ENCODE measurements at regions of chr9 and their contacts with region 1.

Region 1: DNA sequence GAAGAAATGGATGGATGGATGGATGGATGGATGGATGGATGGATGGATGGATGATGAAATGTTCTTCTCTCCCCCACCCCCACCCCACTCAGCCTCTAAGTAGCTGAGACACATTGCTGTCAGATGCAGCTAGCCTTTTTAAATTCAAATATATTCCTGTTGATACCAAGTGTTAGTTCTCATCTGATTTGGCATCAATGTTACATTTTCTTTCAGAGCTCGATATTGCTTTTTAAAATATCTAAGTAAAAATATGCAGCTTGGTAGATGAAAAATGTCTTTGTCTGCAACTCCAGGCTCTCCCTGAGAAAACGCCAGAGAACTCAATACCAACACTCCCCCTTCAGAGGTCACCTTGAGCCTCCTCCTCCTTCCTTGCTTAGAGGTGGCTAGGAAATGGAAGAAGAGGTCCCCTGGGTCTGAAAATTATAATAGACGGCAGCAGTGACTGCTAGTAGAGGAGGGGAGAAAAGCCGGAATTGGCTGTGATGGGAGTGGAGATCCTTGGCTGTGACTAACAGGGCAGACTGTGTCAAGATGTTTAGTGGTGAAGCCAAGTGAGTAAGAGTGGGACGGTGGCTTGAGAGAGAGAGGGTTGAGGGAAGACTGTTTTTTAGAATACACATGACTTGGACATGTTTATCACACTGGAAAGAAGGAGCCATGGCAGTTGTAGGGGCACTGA is 156.0 kb downstream of the ZNF462 start:
- DNase-seq: no peak
- ATAC-seq: peak in 6 of 8 donors; percentile 32 to 81 (median 56)
- H3K4me3 ChIP-seq: no peak overlapping the region
- H3K27ac ChIP-seq: no peak overlapping the region
- H3K4me1 ChIP-seq: peaks cover 0 to 19% (median 7%) of the 10 kb centered on the region in 9 donors
- H3K27me3 ChIP-seq: no peaks in the 10 kb centered on the region
- CTCF ChIP-seq: no peak

Region 2: GRCh38 chr9:106854456-106854855 is 164.5 kb before region 1 on chr9:
- intact Hi-C with region 1: no loop called
- DNase-seq: no peak
- ATAC-seq: no peak
- H3K4me3 ChIP-seq: no peak overlapping the region
- H3K27ac ChIP-seq: no peak overlapping the region
- H3K4me1 ChIP-seq: peaks cover 0 to 5% (median 0%) of the 10 kb centered on the region in 9 donors
- H3K27me3 ChIP-seq: peaks cover 0 to 15% (median 0%) of the 10 kb centered on the region in 7 donors
- CTCF ChIP-seq: no peak

Region 3: DNA sequence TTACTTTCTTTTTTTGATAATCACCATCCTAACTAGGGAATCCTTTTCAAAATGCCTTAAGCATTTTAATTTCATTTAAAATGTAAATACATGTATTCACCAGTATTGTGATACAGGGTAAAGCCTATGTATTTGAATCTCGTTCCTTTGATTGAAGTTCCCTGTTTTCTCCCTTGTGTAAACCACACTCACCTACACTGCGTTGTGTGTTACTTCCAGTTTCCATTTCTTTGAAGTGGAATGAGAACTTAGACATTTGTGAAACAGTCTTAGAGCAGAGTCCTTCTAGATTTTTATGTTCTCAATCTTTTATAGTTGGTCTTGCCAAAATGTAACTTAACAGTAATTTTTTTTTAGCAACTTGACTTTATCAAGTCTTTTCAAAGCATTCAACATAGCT is 54.7 kb before region 1 on chr9:
- intact Hi-C with region 1: no loop called
- DNase-seq: no peak
- ATAC-seq: no peak
- H3K4me3 ChIP-seq: no peak overlapping the region
- H3K27ac ChIP-seq: peak overlapping the region in 4 of 10 donors; percentile 63 to 81 (median 80)
- H3K4me1 ChIP-seq: peaks cover 0 to 70% (median 40%) of the 10 kb centered on the region in 9 donors
- H3K27me3 ChIP-seq: no peaks in the 10 kb centered on the region
- CTCF ChIP-seq: no peak

Region 4: GRCh38 chr9:107260437-107261086 is 241.6 kb after region 1 on chr9:
- intact Hi-C with region 1: no loop called
- DNase-seq: no peak
- ATAC-seq: no peak
- H3K4me3 ChIP-seq: no peak overlapping the region
- H3K27ac ChIP-seq: no peak overlapping the region
- H3K4me1 ChIP-seq: no peaks in the 10 kb centered on the region
- H3K27me3 ChIP-seq: no peaks in the 10 kb centered on the region
- CTCF ChIP-seq: no peak

Region 5: GRCh38 chr9:108290839-108291585 is 1272.0 kb after region 1 on chr9:
- intact Hi-C with region 1: loop called in 1 of 10 experiments (anchors 5 kb)
- DNase-seq: no peak
- ATAC-seq: peak in 3 of 8 donors; percentile 42 to 52 (median 44)
- H3K4me3 ChIP-seq: no peak overlapping the region
- H3K27ac ChIP-seq: no peak overlapping the region
- H3K4me1 ChIP-seq: no peaks in the 10 kb centered on the region
- H3K27me3 ChIP-seq: no peaks in the 10 kb centered on the region
- CTCF ChIP-seq: no peak